Activated naive CD8-positive, alpha-beta T cell treated with anti-CD3 and anti-CD28 coated beads, Interleukin-2, amount 10 ng/mL, durations not matched to agents 7 days and 5 days (primary cell): ENCODE measurements at regions of chr9 and their contacts with region 1.

Region 1: GRCh38 chr9:36156116-36156515 is 13.1 kb upstream of the CCIN start:
- DNase-seq: no peak
- ATAC-seq: no peak
- H3K4me3 Mint-ChIP-seq: no peak overlapping the region
- H3K27ac Mint-ChIP-seq: no peak overlapping the region
- H3K4me1 Mint-ChIP-seq: peaks cover 33% of the 10 kb centered on the region
- H3K27me3 Mint-ChIP-seq: no peaks in the 10 kb centered on the region

Region 2: GRCh38 chr9:36166101-36166927 is 10.2 kb after region 1 on chr9:
- POLR2A ChIA-PET with region 1: interaction called, 11 read pairs
- DNase-seq: peak; percentile 95
- ATAC-seq: peak; percentile 94
- H3K4me3 Mint-ChIP-seq: peak overlapping the region; percentile 76
- H3K27ac Mint-ChIP-seq: peak overlapping the region; percentile 68
- H3K4me1 Mint-ChIP-seq: peaks cover 4% of the 10 kb centered on the region
- H3K27me3 Mint-ChIP-seq: peaks cover 27% of the 10 kb centered on the region